PC-9 (cell line): ENCODE measurements at regions of chr11 and their contacts with region 1.

Region 1: GRCh38 chr11:69486773-69487291 is 5.4 kb downstream of the LINC01488 start:
- DNase-seq: no peak
- H3K4me3 ChIP-seq: no peak overlapping the region
- H3K27ac ChIP-seq: no peak overlapping the region
- H3K4me1 ChIP-seq: no peaks in the 10 kb centered on the region
- H3K27me3 ChIP-seq: peaks cover 14% of the 10 kb centered on the region
- CTCF ChIP-seq: no peak

Region 2: DNA sequence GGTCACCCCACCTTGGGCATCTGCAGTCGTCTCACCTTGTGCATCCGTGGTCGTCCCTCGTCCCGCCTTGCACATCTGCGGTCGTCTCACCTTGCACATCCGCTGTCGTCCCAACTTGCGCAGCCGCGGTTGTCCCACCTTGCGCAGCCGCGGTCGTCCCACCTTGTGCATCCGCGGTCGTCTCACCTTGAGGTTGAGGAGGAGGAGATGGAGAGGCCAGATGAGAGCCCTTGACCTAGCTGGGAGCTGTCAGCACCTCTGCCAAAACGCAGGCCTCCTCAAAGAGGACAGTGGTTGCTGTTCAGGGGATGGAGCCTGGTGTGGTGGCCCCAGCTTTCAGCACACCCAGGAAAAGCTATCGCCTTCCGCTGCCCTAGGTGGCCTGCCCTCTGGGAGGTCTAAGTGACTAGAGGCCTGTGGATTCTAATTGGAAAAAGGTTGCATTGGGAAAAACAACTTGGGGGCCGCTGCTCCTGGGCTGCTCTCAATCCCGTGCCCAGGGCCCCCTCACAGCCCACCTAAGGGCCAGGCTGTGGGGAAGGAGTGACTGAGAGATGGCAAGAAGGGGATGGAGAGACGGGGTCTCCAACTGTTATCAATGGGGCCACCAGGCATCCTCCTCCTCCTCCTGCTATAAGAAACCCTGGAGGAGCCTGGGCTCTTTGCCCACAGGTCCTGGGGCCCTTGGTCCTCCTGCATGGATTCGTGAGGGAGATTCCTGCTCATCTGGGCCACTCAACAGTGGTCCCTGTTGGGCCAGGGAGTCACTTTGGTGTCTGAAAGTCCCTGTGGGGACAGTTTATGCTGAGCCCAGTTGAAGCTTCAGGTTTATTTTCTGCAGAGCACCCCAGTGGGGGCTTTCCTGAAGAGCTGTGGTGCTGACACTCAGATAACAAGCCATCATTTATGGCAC is 102.0 kb before region 1 on chr11:
- CTCF ChIA-PET with region 1: no interaction called
- POLR2A ChIA-PET with region 1: no interaction called
- intact Hi-C with region 1: no loop called
- DNase-seq: no peak
- H3K4me3 ChIP-seq: no peak overlapping the region
- H3K27ac ChIP-seq: no peak overlapping the region
- H3K4me1 ChIP-seq: peaks cover 30% of the 10 kb centered on the region
- H3K27me3 ChIP-seq: no peaks in the 10 kb centered on the region
- CTCF ChIP-seq: no peak

Region 3: GRCh38 chr11:69471329-69472052 is 15.3 kb before region 1 on chr11:
- CTCF ChIA-PET with region 1: interaction called, 10 read pairs
- POLR2A ChIA-PET with region 1: no interaction called
- intact Hi-C with region 1: no loop called
- DNase-seq: no peak
- H3K4me3 ChIP-seq: no peak overlapping the region
- H3K27ac ChIP-seq: no peak overlapping the region
- H3K4me1 ChIP-seq: no peaks in the 10 kb centered on the region
- H3K27me3 ChIP-seq: no peaks in the 10 kb centered on the region
- CTCF ChIP-seq: no peak

Region 4: DNA sequence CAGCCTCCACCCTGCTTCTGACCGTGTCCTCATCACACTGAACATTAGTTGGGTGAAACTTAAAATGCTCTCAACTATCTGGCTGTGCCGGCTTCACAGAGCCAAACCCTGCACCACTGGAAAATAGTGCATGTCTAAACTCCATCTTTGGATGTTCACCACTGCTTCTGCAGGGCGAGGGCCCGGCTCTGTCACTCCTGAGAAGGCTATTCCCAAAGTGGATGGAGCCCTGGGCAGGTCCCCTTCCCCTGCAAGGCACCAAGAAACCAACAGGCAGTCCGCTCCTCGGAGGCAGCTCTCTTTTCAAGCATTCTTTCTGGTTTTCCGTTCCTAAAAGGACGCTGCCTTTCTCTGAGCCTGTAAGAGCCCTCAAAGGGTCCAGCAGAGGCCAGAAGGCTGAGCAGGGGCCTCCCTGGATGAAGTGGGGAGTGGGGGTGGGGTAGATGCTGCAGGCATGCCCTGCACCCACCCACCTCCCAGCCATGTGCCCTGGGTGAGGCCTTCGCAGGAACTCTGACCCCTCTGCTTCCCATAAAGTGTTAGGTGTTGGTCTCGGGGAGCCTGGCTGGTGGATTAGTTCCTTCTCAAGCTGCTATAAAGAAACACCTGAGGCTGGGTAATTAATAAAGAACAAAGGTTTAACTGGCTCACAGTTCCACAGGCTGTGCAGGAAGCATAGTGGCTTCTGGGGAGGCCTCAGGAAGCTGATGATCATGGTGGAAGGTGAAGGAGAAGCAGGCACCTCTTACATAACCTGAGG is 17.9 kb after region 1 on chr11:
- CTCF ChIA-PET with region 1: no interaction called
- POLR2A ChIA-PET with region 1: no interaction called
- intact Hi-C with region 1: loop called (anchors 1 kb)
- DNase-seq: no peak
- H3K4me3 ChIP-seq: no peak overlapping the region
- H3K27ac ChIP-seq: no peak overlapping the region
- H3K4me1 ChIP-seq: no peaks in the 10 kb centered on the region
- H3K27me3 ChIP-seq: peaks cover 16% of the 10 kb centered on the region; the same call in 1 of the 2 replicates
- CTCF ChIP-seq: no peak

Region 5: GRCh38 chr11:69518081-69518950 is 31.5 kb after region 1 on chr11:
- CTCF ChIA-PET with region 1: no interaction called
- POLR2A ChIA-PET with region 1: no interaction called
- intact Hi-C with region 1: no loop called
- DNase-seq: no peak
- H3K4me3 ChIP-seq: no peak overlapping the region
- H3K27ac ChIP-seq: no peak overlapping the region
- H3K4me1 ChIP-seq: no peaks in the 10 kb centered on the region
- H3K27me3 ChIP-seq: peaks cover 26% of the 10 kb centered on the region; the same call in 1 of the 2 replicates
- CTCF ChIP-seq: no peak